Vagina (tissue), 2 donors: ENCODE measurements at regions of chr5 and their contacts with region 1.

Region 1: DNA sequence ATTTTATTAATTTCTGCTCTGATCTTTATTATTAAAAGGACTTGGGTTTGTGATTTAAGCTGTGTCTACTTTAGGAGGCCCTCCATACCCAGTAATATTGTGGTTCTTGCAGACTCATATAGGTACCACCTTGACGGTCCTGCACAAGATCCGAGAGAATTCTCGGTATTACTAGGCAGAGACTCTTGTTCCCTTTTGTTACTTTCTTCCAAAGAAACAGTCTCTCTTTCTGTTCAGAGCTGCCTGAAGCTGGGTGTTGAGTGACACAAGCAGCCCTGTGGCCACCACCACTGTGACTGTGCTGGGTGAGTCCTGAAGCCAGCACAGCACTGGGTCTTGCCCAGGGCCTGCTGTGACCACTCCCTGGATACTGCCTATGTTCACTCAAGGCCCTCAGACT is 666.6 kb downstream of the SEMA5A start:
- DNase-seq: no peak
- H3K4me3 ChIP-seq: no peak overlapping the region
- H3K27ac ChIP-seq: no peak overlapping the region
- H3K4me1 ChIP-seq: no peaks in the 10 kb centered on the region
- H3K27me3 ChIP-seq: no peaks in the 10 kb centered on the region
- CTCF ChIP-seq: no peak
- POLR2A ChIP-seq: no peak

Region 2: GRCh38 chr5:8740595-8740994 is 138.7 kb before region 1 on chr5:
- intact Hi-C with region 1: loop called (anchors 2 kb)
- DNase-seq: no peak
- H3K4me3 ChIP-seq: no peak overlapping the region
- H3K27ac ChIP-seq: no peak overlapping the region
- H3K4me1 ChIP-seq: no peaks in the 10 kb centered on the region
- H3K27me3 ChIP-seq: no peaks in the 10 kb centered on the region
- CTCF ChIP-seq: no peak
- POLR2A ChIP-seq: no peak

Region 3: DNA sequence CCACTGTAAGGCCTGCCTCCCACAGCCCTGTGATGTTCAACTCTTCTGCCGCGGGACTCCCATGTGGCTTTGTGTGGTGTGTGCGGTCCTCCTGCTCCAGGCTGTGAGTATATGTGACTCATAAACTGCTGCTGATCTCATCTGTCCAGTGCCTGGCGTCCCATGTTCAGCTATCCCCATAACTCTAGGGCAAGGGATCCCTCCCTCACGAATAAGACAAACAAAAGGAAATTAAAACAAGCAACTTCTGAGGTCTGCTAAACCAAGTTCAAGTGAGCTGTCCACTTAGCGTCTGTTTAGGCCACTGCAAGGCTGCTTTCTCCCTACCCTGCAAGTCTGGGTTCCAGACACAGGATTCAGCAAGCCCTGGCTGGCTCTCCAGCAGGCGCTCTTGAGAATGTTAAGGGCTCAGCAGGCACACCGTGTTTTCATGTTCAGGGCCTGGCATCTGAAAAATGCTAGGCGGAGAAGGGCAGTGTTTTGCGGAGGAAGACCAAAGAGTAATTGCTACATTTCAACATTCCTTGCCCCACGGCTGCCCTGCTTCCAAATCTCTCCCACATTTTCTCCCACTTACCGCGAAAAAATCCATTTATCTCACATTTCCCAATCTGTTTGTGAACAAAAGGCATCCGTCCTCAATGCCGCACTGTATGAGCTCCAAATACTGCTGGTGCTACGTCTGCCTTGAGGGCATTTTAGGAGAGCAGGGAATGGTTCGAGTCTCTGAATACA is 386.4 kb after region 1 on chr5:
- intact Hi-C with region 1: no loop called
- DNase-seq: no peak
- H3K4me3 ChIP-seq: peak overlapping the region in 1 of 2 donors; percentile 21
- H3K27ac ChIP-seq: peak overlapping the region; percentile 60
- H3K4me1 ChIP-seq: peaks cover 8% of the 10 kb centered on the region
- H3K27me3 ChIP-seq: no peaks in the 10 kb centered on the region
- CTCF ChIP-seq: no peak
- POLR2A ChIP-seq: no peak